Caco-2 (cell line): ENCODE measurements at regions of chr13 and their contacts with region 1.

Region 1: GRCh38 chr13:61954092-61954491 is 538.4 kb upstream of the PCDH20 start:
- DNase-seq: peak in 1 of 2 experiments; percentile 17
- H3K4me3 ChIP-seq: no peak overlapping the region
- H3K4me3 Mint-ChIP-seq: no peak overlapping the region
- H3K27ac Mint-ChIP-seq: no peak overlapping the region
- H3K4me1 ChIP-seq: no peaks in the 10 kb centered on the region
- H3K4me1 Mint-ChIP-seq: no peaks in the 10 kb centered on the region
- H3K27me3 ChIP-seq: no peaks in the 10 kb centered on the region
- H3K27me3 Mint-ChIP-seq: peaks cover 3% of the 10 kb centered on the region
- CTCF ChIP-seq: peak; percentile 28 to 39

Region 2: GRCh38 chr13:60627071-60627686 is 1326.9 kb before region 1 on chr13:
- CTCF ChIA-PET with region 1: no interaction called
- POLR2A ChIA-PET with region 1: no interaction called
- intact Hi-C with region 1: loop called (anchors 1 kb)
- DNase-seq: peak; percentile 44 to 71
- H3K4me3 ChIP-seq: no peak overlapping the region
- H3K4me3 Mint-ChIP-seq: no peak overlapping the region
- H3K27ac Mint-ChIP-seq: no peak overlapping the region
- H3K4me1 ChIP-seq: no peaks in the 10 kb centered on the region
- H3K4me1 Mint-ChIP-seq: no peaks in the 10 kb centered on the region
- H3K27me3 ChIP-seq: no peaks in the 10 kb centered on the region; the same call in 1 of the 2 replicates
- H3K27me3 Mint-ChIP-seq: peaks cover 27% of the 10 kb centered on the region
- CTCF ChIP-seq: peak; percentile 78 to 81

Region 3: DNA sequence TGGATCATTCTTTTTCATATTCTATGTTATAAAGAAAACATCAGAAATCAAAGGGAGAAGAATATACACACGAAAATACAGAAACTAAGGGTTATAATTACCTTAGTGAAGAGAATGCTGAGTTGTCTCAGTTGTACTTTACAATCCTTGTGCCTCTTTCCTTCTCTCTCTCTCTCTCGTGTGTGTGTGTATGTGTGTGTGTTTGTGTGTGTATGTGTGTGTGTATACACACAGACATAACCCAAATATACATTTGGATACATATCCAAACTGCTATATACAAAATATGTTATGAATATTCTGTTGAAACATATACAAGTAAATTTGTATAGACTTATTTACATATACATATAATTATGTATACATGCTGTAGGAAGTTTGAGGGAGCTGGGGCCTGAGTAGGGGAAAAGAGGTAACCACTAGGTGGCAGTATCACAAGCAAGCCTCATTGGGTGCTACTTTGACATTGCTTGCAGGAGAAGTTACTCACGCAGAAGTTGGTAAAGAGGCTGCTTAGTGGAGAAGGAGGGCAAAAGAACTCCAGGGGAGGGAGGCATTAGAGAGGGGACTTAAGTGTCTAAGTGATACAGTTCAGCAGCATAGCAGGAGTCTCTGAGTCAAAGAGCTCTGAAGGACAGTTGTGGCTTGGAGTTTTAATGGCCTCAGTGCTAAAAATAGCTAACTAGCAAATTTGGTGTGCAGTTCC is 73.4 kb before region 1 on chr13:
- CTCF ChIA-PET with region 1: interaction called, 16 read pairs
- POLR2A ChIA-PET with region 1: no interaction called
- intact Hi-C with region 1: loop called (anchors 1 kb)
- DNase-seq: peak; percentile 48 to 62
- H3K4me3 ChIP-seq: no peak overlapping the region
- H3K4me3 Mint-ChIP-seq: no peak overlapping the region
- H3K27ac Mint-ChIP-seq: no peak overlapping the region
- H3K4me1 ChIP-seq: no peaks in the 10 kb centered on the region
- H3K4me1 Mint-ChIP-seq: no peaks in the 10 kb centered on the region
- H3K27me3 ChIP-seq: no peaks in the 10 kb centered on the region
- H3K27me3 Mint-ChIP-seq: peaks cover 2% of the 10 kb centered on the region
- CTCF ChIP-seq: peak; percentile 52 to 70